Naive thymus-derived CD8-positive, alpha-beta T cell (primary cell): ENCODE measurements at regions of chr17 and their contacts with region 1.

Region 1: DNA sequence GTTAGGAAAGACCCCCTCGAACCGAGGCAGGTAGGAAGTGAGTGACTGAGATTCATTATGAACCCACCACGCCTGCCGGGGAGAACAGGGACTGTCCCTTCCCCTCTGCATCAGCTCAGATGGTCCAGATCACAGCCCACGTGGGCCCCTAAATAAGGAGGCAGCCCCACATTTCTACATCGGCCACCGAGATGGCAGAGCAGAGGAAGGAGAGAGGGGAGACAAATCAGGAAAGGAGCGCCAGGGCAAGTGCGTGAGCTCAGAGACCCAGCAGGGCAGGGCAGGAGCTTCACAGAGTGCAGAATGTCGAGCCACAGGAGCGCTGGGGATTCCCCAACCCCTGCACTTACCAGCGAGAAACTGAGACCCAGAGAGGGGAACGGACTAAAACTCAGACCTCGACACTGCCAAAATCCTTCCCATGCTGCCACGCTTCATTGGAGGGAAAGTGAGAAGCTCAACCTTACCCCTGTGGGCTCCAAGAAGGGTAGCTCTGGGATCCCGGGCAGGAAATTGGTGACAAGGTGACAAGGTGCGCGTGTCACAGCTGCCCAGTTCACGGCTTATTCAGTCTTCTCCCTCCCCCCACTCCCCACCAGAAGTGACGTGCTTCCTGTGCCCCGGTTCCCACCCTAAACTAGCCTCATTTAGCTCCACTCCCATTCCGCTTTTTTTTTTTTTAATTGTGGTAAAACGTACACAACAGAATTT is at the start of gene ICAM2:
- DNase-seq: peak; percentile 76 to 97 (median 94)
- ATAC-seq: peak; percentile 75 to 77
- H3K4me3 Mint-ChIP-seq: peak within 1 kb of the TSS; percentile 94 to 100 (median 100)
- H3K27ac Mint-ChIP-seq: peak within 1 kb of the TSS; percentile 94 to 100 (median 100)
- H3K4me1 Mint-ChIP-seq: peaks cover 27 to 88% (median 73%) of the 10 kb centered on the region in 4 donors
- H3K27me3 Mint-ChIP-seq: peaks cover 0 to 3% (median 0%) of the 10 kb centered on the region in 5 donors
- polyA plus RNA-seq, gene ICAM2: 218 to 306 (median 289) TPM

Region 2: DNA sequence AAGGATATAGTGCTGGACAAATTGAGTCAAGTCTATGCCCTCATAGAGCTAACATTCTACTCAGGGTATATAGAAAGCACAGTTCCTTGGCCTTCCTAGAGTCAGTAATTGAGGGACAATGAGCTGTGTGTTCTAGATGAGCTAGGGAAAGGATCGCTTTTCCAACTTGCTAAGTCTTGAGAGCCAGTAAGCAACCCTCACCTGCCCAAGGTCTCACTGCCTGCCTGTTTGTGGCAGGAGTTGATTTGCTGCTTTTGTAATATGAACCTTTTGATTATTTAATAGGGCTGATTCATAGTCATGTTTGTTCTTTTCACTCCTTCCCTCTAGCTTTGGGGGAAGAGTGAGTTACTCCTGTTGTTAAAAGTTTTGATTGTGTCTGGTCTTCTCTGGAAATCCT is 239.7 kb before region 1 on chr17:
- POLR2A ChIA-PET with region 1: no interaction called
- DNase-seq: no peak
- ATAC-seq: no peak
- H3K4me3 Mint-ChIP-seq: peak overlapping the region in 1 of 10 donors; percentile 34
- H3K27ac Mint-ChIP-seq: peak overlapping the region in 8 of 10 donors; percentile 15 to 83 (median 50)
- H3K4me1 Mint-ChIP-seq: peaks cover 38 to 88% (median 77%) of the 10 kb centered on the region in 4 donors
- H3K27me3 Mint-ChIP-seq: no peaks in the 10 kb centered on the region

Region 3: DNA sequence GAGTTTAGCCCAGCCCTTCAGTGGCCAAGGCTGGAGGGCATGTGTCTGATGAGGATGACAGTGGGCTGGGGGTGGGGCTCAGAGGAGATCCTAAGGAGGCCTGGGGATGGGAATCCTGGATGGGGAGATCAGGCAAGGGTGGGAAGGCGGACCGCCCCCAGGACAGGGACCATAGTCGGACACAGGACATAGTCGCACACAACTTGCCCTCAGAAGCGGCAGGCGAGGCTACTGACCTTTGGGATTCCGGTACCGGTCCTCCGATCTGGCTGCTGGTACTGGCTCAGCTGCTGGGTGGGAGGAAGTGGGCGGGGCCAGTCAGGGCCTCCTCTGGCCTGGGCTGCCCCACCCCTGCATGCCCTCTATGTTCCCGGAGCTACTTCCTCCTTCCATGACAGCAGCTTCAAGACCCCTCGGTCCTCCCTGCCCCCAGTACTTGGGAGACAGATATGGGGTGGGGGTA is 89.1 kb before region 1 on chr17:
- POLR2A ChIA-PET with region 1: interaction called, 19 read pairs
- DNase-seq: peak in 9 of 10 donors; percentile 28 to 79 (median 51)
- ATAC-seq: peak; percentile 76 to 78
- H3K4me3 Mint-ChIP-seq: peak overlapping the region; percentile 87 to 94 (median 93)
- H3K27ac Mint-ChIP-seq: peak overlapping the region; percentile 53 to 94 (median 92)
- H3K4me1 Mint-ChIP-seq: peaks cover 15 to 56% (median 29%) of the 10 kb centered on the region in 4 donors
- H3K27me3 Mint-ChIP-seq: no peaks in the 10 kb centered on the region

Region 4: DNA sequence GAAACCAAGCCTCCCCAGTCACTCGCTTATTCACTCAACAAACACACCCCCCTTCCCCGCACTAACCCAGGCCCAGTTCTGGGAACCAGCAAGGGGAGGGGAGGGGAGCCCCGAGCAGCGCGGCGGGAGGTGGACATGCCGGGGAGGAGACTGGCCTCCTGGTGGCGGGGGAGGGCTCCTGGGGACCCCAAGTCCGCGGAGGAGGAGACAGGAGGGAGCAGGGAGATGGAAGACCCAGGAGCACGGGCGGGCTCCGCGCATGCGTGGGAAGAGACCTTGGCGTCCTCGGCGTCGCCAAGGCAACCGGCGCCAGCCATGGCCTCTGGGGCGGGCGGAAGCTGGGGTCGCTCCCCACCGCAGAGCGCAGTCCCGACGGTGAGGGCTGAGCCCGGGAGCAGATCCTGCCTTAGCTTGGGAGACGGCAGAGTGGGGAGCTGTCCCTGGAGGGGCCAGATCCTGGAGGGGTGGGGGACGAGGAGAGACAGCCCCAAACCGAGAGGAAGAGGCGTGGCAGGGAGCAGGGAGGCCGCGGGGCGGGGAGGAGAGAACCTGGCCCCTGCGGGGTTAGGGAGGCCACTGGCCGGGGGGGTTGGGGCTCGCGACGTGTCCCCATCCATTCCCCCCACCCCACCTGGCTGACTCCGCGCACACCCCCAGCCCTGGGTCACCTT is 22.0 kb before region 1 on chr17 and contains the start of gene PRR29:
- POLR2A ChIA-PET with region 1: interaction called, 150 read pairs
- DNase-seq: peak; percentile 61 to 85 (median 74)
- ATAC-seq: peak; percentile 81 to 82
- H3K4me3 Mint-ChIP-seq: peak within 1 kb of the TSS; percentile 84 to 94 (median 89)
- H3K27ac Mint-ChIP-seq: peak within 1 kb of the TSS; percentile 55 to 92 (median 81)
- H3K4me1 Mint-ChIP-seq: peaks cover 13 to 46% (median 38%) of the 10 kb centered on the region in 4 donors
- H3K27me3 Mint-ChIP-seq: no peaks in the 10 kb centered on the region
- polyA plus RNA-seq, gene PRR29: 3.4 to 4.6 (median 3.7) TPM

Region 5: DNA sequence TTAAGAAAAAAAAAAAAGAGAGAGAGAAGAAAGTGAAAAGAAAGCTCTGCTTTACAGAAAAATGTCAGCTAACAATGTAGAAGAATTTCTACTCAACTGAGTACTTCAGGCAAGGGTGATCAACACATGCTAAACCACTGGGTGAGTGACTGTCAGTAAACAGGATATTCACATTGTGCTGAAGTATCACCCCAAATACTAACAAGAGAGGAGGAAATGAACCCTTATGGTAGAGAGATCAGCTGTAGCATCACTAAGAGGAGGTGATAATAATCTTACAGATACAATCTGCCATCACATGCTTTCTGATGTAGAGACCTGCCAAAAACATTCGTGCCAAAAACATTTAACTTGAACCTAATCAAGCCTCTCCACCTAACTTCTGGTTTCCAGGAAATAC is 30.9 kb after region 1 on chr17:
- POLR2A ChIA-PET with region 1: interaction called, 12 read pairs
- DNase-seq: peak in 4 of 10 donors; percentile 23 to 78 (median 62)
- ATAC-seq: peak; percentile 98 to 100
- H3K4me3 Mint-ChIP-seq: peak overlapping the region; percentile 2 to 69 (median 42)
- H3K27ac Mint-ChIP-seq: peak overlapping the region; percentile 80 to 97 (median 90)
- H3K4me1 Mint-ChIP-seq: peaks cover 12 to 38% (median 28%) of the 10 kb centered on the region in 4 donors
- H3K27me3 Mint-ChIP-seq: no peaks in the 10 kb centered on the region